Astrocyte of the cerebellum (primary cell): ENCODE measurements at regions of chr20 and their contacts with region 1.

Region 1: GRCh38 chr20:39489986-39490560 is 527.9 kb downstream of the DHX35 start:
- DNase-seq: no peak
- H3K4me3 ChIP-seq: no peak overlapping the region
- CTCF ChIP-seq: no peak

Region 2: DNA sequence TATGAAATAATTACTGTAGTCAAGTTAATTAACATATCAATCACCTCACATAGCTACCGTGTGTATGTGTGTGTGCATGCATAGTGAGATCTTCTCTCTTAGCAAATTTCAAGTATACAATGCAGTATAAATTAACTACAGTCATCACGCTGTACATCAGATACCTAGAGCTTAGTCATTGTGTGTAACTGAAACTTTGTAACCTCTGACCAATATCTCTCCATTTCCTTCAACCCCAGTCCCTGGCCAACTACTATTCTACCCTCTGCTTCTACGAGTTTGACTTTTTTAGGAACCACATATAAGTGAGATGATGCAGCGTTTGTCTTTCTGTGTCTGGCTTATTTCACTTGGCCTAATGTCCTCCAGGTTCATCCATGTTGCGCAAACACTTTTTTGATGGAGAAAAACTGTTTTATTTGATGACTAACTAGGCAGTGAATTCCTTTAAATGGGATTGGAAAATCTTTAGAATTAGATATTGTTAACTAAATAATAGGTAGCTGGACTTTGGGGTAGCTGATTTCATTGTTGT is 68.4 kb before region 1 on chr20:
- in situ Hi-C with region 1: no loop called
- DNase-seq: no peak
- H3K4me3 ChIP-seq: no peak overlapping the region
- CTCF ChIP-seq: no peak

Region 3: GRCh38 chr20:39446397-39446796 is 43.7 kb before region 1 on chr20:
- in situ Hi-C with region 1: loop called (anchors 5 kb)
- DNase-seq: no peak
- H3K4me3 ChIP-seq: no peak overlapping the region
- CTCF ChIP-seq: no peak

Region 4: GRCh38 chr20:39563349-39563748 is 73.3 kb after region 1 on chr20:
- in situ Hi-C with region 1: no loop called
- DNase-seq: no peak
- H3K4me3 ChIP-seq: no peak overlapping the region
- CTCF ChIP-seq: no peak